Ovary (tissue), 10 donors: ENCODE measurements at regions of chr3 and their contacts with region 1.

Region 1: DNA sequence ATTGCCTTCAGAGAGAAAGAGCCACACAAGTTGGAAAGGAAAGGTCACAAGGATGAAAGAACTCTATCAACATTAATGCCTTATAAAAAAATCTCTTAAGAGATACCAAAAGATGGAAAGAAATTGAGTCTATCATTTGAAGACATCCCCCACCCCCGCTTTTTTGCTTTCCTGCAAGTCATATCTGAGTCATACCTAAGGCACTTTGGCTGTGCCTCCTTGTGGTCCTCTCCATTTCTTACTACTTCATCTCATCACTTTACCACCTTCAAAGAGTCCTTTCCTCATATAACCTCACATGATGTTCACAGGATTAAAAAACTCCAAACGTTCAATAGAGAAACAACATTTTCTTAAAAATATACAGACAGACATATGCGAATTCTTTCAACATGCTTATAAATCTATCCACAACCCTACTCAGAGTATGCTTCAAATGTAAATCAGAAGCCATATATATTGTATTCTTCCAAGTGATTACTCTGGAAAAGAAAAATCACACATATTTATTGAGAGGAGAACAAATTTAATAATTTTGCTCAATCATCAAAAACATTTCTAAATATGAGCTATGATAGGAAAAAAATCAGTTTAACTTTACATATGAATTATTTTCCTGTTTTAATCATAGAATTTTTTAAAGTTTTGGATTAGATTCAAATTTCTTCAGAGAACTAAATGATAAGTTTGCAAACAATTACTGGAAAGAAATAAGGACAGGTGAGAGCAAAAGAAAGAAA is 1003.9 kb upstream of the CFAP20DC start:
- DNase-seq: no peak
- H3K4me3 ChIP-seq: no peak overlapping the region
- H3K27ac ChIP-seq: no peak overlapping the region
- H3K4me1 ChIP-seq: no peaks in the 10 kb centered on the region
- H3K27me3 ChIP-seq: no peaks in the 10 kb centered on the region
- CTCF ChIP-seq: no peak
- EP300 ChIP-seq: no peak
- POLR2A ChIP-seq: no peak

Region 2: GRCh38 chr3:59595830-59596229 is 457.9 kb before region 1 on chr3:
- intact Hi-C with region 1: loop called in 1 of 4 experiments (anchors 5 kb)
- DNase-seq: no peak
- H3K4me3 ChIP-seq: no peak overlapping the region
- H3K27ac ChIP-seq: no peak overlapping the region
- H3K4me1 ChIP-seq: peaks cover 1% of the 10 kb centered on the region
- H3K27me3 ChIP-seq: no peaks in the 10 kb centered on the region
- CTCF ChIP-seq: no peak
- EP300 ChIP-seq: no peak
- POLR2A ChIP-seq: no peak